ENCODE measurements at regions of chr1 and their contacts with region 1.

Region 1: DNA sequence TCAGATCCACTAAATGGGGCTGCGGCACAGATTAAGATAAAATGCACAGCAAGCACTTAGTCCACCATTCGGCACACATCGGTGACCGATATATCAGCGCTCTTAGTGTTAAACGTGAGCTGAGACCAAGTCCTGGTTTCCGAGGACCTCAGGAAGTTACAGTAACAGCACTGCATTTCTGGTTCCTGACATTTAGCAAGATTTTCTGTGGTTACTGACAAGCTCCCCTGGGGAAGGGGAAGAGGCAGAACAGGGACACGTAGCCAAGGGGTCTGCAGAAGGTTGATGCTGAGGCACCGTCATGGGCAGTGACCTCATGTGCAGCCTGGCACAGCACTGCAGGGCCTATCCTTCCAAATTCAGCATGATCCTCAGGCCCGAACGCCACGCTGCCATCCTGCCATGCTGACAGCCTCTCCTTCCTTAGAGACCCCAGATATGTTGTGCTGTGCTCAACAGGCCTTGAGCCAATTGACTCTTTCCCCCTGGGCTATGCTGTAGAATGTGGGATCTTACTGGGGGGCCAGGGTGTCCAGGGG is 13.4 kb upstream of the PEF1 start:
- DNase-seq: no peak
- H3K4me3 ChIP-seq: no peak overlapping the region
- H3K4me3 Mint-ChIP-seq: no peak overlapping the region
- H3K27ac Mint-ChIP-seq: no peak overlapping the region
- H3K4me1 ChIP-seq: no peaks in the 10 kb centered on the region
- H3K4me1 Mint-ChIP-seq: no peaks in the 10 kb centered on the region
- H3K27me3 ChIP-seq: no peaks in the 10 kb centered on the region
- H3K27me3 Mint-ChIP-seq: no peaks in the 10 kb centered on the region
- CTCF ChIP-seq: no peak

Region 2: GRCh38 chr1:31644560-31645273 is 13.3 kb before region 1 on chr1 and contains the start of gene PEF1:
- CTCF ChIA-PET with region 1: no interaction called
- POLR2A ChIA-PET with region 1: interaction called, 11 read pairs
- intact Hi-C with region 1: no loop called
- DNase-seq: peak; percentile 97
- H3K4me3 ChIP-seq: peak within 1 kb of the TSS; percentile 86
- H3K4me3 Mint-ChIP-seq: peak within 1 kb of the TSS; percentile 100
- H3K27ac Mint-ChIP-seq: peak within 1 kb of the TSS; percentile 100
- H3K4me1 ChIP-seq: 0 out of 2 replicates have a peak, but pooled peaks cover 4% of the 10 kb centered on the region
- H3K4me1 Mint-ChIP-seq: no peaks in the 10 kb centered on the region
- H3K27me3 ChIP-seq: no peaks in the 10 kb centered on the region
- H3K27me3 Mint-ChIP-seq: no peaks in the 10 kb centered on the region
- CTCF ChIP-seq: no peak
- total RNA-seq, gene PEF1: 21.9 and 22.1 TPM in 2 replicates